ENCODE measurements at regions of chr5 and their contacts with region 1.

Region 1: DNA sequence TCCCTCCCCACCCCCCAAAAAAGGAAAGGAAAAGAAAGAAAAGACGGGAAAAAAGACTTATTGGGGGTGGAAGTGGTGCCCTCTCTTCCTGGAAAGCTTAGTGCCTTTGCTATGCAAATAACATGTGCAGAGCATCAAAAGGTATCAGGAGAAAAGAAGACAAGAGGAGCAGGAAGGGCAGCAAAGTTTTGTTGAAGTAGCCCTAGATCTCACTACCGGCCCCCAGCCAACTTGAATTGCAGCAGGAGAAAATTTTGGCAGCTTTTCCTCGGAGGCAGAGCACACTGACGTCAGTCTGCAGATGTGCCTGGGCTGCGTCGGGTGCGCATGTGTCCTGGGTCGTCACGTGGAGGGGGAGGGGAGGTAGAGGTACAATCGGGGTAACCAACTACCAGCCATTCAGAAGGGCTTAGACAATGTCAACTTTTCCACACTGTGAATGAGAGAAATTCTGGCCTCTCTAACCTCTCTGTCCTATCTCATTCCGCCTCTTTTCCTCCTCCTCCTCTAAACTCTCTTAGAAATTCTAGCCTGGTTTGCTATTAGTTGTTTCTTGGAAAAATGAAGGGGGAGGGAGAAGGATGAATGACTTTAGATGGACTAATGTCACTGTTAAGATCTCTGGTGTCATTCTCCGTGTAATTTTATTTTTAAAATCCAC is at the start of gene ADAMTS6:
- DNase-seq: peak; percentile 94
- H3K4me3 Mint-ChIP-seq: no peak within 1 kb of the TSS
- H3K27ac Mint-ChIP-seq: peak within 1 kb of the TSS; percentile 92
- H3K4me1 Mint-ChIP-seq: peaks cover 8% of the 10 kb centered on the region
- H3K27me3 Mint-ChIP-seq: no peaks in the 10 kb centered on the region
- CTCF ChIP-seq: no peak
- total RNA-seq, gene ADAMTS6: 17.8 and 19.5 TPM in 2 replicates

Region 2: DNA sequence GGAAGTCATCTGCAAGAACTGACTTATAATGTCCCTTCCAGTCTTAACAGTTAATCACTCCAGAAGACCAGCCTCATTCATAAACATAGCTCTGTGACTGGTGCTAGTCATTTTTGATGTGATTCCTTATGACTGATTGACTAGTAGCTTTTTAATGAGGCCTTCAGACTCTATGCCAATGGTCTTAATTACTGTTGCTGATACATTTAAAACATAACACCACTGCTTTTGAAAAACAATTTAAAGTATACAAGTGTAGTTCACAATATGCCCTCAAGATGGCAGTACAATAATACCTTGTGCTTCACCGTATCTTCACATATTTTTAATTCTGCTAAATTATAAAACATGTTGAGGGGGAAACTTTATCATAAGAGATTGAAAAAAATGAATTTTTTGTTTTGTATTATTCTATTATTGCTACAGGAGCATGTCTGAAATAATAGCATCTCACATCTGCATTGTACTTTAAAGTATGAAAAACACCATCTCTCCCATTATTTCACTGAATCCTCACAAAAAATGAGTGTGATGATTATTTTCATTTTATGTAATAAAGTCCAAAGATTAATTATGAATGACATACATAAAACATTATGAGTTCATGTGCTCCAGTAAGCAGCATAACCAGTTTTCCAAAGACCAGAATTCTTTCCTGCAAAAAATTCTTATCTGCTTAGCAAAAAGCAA is 846.6 kb before region 1 on chr5:
- CTCF ChIA-PET with region 1: interaction called, 7 read pairs
- POLR2A ChIA-PET with region 1: interaction called, 3 read pairs
- intact Hi-C with region 1: loop called (anchors 1 kb)
- DNase-seq: peak; percentile 50
- H3K4me3 Mint-ChIP-seq: no peak overlapping the region
- H3K27ac Mint-ChIP-seq: no peak overlapping the region
- H3K4me1 Mint-ChIP-seq: no peaks in the 10 kb centered on the region
- H3K27me3 Mint-ChIP-seq: no peaks in the 10 kb centered on the region
- CTCF ChIP-seq: peak; percentile 71

Region 3: DNA sequence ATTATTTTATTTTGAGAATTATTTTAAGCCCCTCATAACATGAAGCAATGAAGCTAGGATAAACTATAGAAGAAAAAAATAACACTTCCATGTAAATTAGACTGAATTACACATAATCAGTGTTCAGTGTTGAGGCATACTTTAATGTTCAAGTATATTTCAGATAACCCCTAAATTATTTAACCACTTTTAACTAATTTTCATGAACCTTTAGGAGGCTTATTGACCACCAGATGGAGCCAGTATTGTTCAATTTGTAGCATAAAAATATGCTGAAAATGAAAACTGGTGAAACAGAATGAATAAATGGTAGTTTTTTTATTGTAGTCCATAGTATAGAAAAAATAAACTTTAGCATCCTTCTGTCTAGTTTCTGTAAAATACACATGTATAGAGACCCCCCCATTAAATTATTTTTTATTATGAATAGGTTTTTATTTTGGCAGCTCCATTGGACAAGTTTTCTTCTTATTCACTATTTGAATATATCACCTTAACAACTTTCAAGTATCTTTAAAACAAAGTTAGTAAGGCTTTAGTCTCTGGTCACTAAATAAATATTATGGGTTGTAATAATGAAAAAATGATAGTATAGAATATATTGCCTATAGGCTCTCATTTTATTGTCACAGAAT is 522.9 kb before region 1 on chr5:
- CTCF ChIA-PET with region 1: interaction called, 41 read pairs
- POLR2A ChIA-PET with region 1: interaction called, 21 read pairs
- intact Hi-C with region 1: loop called (anchors 1 kb)
- DNase-seq: peak; percentile 30
- H3K4me3 Mint-ChIP-seq: no peak overlapping the region
- H3K27ac Mint-ChIP-seq: no peak overlapping the region
- H3K4me1 Mint-ChIP-seq: peaks cover under 1% of the 10 kb centered on the region
- H3K27me3 Mint-ChIP-seq: no peaks in the 10 kb centered on the region
- CTCF ChIP-seq: peak; percentile 42

Region 4: DNA sequence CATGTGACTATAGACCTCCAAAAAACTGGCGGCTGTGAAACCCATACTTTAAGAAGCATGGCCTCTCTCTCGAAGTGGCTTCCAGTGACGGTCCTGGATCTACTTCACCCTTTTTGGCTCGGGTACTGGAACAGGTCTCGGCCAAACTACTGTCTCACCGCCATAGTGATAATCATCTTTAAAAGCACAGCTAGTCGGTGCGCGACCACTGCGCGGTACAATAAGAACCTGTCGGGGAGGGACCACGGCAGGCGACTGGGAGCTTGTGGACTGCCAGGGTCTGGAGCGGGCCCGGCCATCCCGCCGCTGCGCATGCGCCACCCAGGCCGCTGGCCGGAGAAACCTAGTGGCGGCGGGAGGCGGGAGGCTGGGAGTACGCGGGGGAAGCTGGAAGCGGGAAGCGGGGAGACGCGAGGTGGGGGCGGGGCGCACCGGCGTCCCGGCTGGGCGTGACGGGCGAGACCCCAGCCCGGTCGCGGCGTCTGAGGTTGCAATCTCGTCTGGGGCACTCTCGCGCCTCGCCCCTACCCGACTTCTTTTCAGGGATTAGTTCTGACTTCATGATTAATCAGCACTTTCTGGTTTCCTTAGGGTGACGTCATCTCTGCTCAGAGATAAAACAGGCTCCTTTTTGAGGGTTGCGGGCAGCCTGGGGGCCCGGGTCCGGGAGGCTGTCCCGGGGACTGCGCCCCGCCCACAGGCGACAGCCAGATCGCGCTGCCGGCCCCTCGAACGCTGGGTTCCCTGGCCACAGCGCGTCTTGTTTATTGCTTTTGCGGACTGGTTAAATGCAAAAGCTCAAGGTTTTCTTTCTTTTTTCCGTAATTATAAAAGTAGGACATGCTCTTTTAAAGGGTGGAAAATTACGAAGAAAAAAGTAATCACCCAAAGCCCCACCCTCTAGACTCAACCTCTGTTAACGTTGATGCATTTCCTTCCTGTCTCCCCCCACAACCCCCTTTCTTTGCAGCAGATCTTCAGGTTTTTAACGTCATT is 446.3 kb before region 1 on chr5:
- CTCF ChIA-PET with region 1: interaction called, 6 read pairs
- POLR2A ChIA-PET with region 1: interaction called, 16 read pairs
- intact Hi-C with region 1: no loop called
- DNase-seq: peak; percentile 81
- H3K4me3 Mint-ChIP-seq: peak overlapping the region; percentile 78
- H3K27ac Mint-ChIP-seq: peak overlapping the region; percentile 92
- H3K4me1 Mint-ChIP-seq: no peaks in the 10 kb centered on the region
- H3K27me3 Mint-ChIP-seq: no peaks in the 10 kb centered on the region
- CTCF ChIP-seq: no peak

Region 5: GRCh38 chr5:65102828-65103711 is 378.7 kb before region 1 on chr5:
- CTCF ChIA-PET with region 1: interaction called, 15 read pairs
- POLR2A ChIA-PET with region 1: no interaction called
- intact Hi-C with region 1: loop called (anchors 1 kb)
- DNase-seq: peak; percentile 42
- H3K4me3 Mint-ChIP-seq: peak overlapping the region; percentile 48
- H3K27ac Mint-ChIP-seq: no peak overlapping the region
- H3K4me1 Mint-ChIP-seq: peaks cover 12% of the 10 kb centered on the region
- H3K27me3 Mint-ChIP-seq: no peaks in the 10 kb centered on the region
- CTCF ChIP-seq: peak; percentile 9

Region 6: GRCh38 chr5:65562731-65563701 is 81.3 kb after region 1 on chr5 and contains the starts of genes CENPK and PPWD1:
- CTCF ChIA-PET with region 1: interaction called, 14 read pairs
- POLR2A ChIA-PET with region 1: interaction called, 14 read pairs
- intact Hi-C with region 1: no loop called
- DNase-seq: peak; percentile 96
- H3K4me3 Mint-ChIP-seq: peak within 1 kb of the TSS; percentile 90
- H3K27ac Mint-ChIP-seq: peak within 1 kb of the TSS; percentile 96
- H3K4me1 Mint-ChIP-seq: peaks cover 25% of the 10 kb centered on the region
- H3K27me3 Mint-ChIP-seq: no peaks in the 10 kb centered on the region
- CTCF ChIP-seq: no peak
- total RNA-seq, gene CENPK: 11.2 and 15.3 TPM in 2 replicates
- total RNA-seq, gene PPWD1: 32.7 and 43.3 TPM in 2 replicates

Measured in MCF 10A (cell line).